Astrocyte of the cerebellum (primary cell): ENCODE measurements at regions of chr13 and their contacts with region 1.

Region 1: DNA sequence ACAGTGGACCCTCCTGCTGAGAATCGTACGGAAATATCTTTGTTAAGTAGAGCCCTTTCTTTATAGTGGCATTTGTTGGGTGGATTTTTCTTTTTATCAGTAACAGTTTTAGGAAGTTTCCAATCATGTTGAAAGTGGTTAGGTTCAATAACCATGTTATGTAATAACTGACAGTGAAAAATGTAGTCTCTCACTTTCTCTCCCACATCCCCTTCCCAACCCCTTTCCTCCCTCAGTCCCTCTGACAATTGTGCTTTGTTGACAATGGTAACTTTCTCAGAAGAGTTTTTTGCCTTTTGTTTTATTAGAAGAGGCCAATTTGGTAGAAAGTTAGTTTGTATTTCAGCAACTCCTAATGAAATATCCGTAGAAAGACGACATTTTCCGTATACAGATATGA is 77.8 kb upstream of the SLAIN1 start:
- DNase-seq: no peak
- H3K4me3 ChIP-seq: no peak overlapping the region
- CTCF ChIP-seq: no peak

Region 2: DNA sequence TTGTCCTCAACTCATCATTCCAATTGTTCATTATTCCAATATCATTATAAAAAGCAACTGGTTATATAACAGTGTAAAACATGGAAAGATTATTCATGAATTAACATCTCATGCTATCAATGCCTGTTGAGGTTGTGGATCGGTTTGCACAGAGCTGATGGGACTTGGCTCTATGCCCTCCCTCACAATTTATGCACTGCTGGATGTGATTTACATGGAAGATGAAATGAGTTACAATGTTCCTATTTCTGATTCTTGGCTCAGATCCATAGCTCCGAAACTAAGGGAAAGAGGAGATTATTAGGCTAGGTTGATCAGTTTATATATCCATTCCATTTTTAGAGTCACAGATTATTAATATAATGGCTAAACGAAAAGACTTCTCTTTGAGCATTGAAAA is 45.6 kb before region 1 on chr13:
- in situ Hi-C with region 1: no loop called
- DNase-seq: no peak
- H3K4me3 ChIP-seq: no peak overlapping the region
- CTCF ChIP-seq: no peak

Region 3: DNA sequence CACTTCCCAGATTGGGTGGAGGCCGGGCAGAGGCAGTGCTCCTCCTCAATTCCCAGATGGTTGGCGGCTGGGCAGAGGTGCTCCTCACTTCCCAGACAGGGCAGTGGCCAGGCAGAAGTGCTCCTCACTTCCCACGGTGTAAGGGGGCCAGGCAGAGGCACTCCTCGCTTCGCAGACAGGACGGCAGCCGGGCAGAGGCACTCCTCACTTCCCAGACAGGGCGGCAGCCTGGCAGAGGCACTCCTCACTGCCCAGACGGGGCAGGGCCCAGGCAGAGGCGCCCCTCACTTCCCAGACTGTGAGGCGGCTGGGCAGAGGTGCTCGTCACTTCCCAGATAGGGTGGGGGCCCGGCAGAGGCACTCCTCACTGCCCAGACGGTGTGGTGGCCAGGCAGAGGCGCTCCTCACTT is 41.2 kb after region 1 on chr13:
- in situ Hi-C with region 1: loop called (anchors 5 kb)
- DNase-seq: no peak
- H3K4me3 ChIP-seq: no peak overlapping the region
- CTCF ChIP-seq: no peak

Region 4: DNA sequence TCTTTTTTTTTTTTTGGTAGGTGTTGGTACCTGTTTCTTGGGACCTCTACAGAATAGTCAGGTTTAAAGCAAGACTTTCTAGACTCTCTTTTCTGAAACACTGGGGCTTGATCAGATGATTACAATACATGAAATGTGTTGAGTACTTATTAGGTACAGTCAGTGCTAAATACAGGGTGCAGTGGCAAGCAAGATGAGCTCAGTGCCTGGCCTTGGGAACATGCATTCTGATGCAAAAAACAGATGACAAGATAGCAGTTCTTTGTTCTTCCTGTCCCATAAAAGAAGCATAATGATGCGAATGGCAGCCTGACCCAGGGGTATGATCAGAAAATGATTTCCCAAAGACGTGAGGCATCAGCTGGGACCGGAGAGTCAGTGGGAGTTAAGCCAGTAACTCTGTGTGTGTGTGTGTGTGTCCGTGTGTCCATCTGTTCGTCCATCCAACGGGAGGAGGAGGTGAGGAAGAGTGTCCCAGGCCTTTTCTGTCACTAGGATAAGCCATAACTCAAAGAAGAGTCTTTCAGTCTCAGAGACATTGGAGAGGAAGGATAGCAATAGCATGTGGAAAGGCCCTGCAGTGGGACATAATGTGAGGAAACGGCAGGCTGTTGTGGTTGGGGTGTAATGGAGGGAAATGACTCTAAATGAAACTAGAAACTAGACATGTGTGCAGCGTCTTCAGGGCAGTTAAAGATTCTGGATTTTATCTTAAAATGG is 110.0 kb after region 1 on chr13:
- in situ Hi-C with region 1: no loop called
- DNase-seq: no peak
- H3K4me3 ChIP-seq: no peak overlapping the region
- CTCF ChIP-seq: no peak

Region 5: GRCh38 chr13:77868714-77869113 is 249.1 kb after region 1 on chr13:
- in situ Hi-C with region 1: no loop called
- DNase-seq: no peak
- H3K4me3 ChIP-seq: no peak overlapping the region
- CTCF ChIP-seq: no peak